H1 (cell line): ENCODE measurements at regions of chr4 and their contacts with region 1.

Region 1: DNA sequence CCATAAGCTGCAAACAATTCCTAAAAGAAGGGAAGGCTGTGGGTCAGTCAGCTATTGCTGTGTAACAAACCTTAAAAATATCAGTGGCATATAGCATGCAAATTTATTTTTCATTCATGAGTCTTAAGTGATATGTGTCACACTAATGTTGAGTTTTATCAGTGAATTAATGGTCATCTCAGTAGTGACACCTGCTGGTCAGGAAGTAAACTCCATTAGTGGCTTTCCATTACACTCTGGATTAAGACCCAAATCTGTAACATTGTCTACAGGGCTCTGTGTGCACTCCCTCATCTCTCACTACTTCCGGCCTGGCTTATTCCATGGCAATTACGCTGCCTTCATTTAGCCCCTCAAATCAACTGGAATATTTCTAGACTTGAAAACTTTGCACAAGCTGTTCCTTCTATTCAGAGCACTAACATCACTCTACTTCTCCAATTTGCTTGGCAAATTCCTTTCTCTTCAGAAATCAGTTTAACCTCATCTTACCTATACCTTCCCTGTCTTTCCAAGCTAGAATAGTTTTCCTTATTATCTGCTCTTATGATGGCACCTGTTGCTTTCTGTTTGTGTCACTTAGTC is 217.3 kb upstream of the TAPT1 start:
- DNase-seq: no peak
- H3K4me3 ChIP-seq: no peak overlapping the region
- H3K27ac ChIP-seq: no peak overlapping the region
- H3K4me1 ChIP-seq: no peaks in the 10 kb centered on the region
- H3K27me3 ChIP-seq: peaks cover 4 to 7% (median 6%) of the 10 kb centered on the region in 4 experiments; a peak in 6 of 7 replicates
- CTCF ChIP-seq: peak in 2 of 3 experiments; percentile 44 to 70; a peak in 2 of 4 replicates
- EP300 ChIP-seq: no peak
- POLR2A ChIP-seq: no peak
- RAD21 ChIP-seq: peak; percentile 65 to 70

Region 2: DNA sequence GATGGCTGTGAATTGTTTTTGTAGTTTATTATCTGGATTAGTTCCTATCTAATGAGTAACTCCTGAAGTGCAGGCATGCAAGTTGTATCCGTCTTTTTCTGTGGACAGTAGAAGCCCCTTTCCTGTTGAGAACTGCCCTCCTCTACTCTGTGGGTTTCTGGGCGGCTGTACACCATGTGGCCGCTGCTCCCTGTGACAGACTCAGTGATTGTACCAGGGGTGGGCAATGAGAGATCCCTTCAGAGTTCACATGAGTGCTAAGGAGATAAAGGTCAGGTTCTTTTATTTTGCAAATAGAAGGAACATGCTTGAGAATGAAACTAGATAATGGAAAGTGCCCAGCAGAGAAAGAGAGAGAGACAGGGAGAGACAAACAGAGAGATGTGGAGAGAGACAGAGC is 141.0 kb before region 1 on chr4:
- CTCF ChIA-PET with region 1: interaction called, 19 read pairs
- POLR2A ChIA-PET with region 1: no interaction called
- DNase-seq: no peak
- H3K4me3 ChIP-seq: no peak overlapping the region
- H3K27ac ChIP-seq: no peak overlapping the region
- H3K4me1 ChIP-seq: 0 out of 7 replicates have a peak, but pooled peaks cover 0 to 3% (median 0%) of the 10 kb centered on the region in 4 experiments
- H3K27me3 ChIP-seq: no peaks in the 10 kb centered on the region
- CTCF ChIP-seq: no peak
- EP300 ChIP-seq: no peak
- POLR2A ChIP-seq: no peak
- RAD21 ChIP-seq: no peak

Region 3: GRCh38 chr4:16431866-16432265 is 11.7 kb before region 1 on chr4:
- CTCF ChIA-PET with region 1: interaction called, 11 read pairs
- POLR2A ChIA-PET with region 1: no interaction called
- DNase-seq: no peak
- H3K4me3 ChIP-seq: no peak overlapping the region
- H3K27ac ChIP-seq: no peak overlapping the region
- H3K4me1 ChIP-seq: no peaks in the 10 kb centered on the region
- H3K27me3 ChIP-seq: no peaks in the 10 kb centered on the region
- CTCF ChIP-seq: no peak
- EP300 ChIP-seq: no peak
- POLR2A ChIP-seq: no peak
- RAD21 ChIP-seq: no peak

Region 4: DNA sequence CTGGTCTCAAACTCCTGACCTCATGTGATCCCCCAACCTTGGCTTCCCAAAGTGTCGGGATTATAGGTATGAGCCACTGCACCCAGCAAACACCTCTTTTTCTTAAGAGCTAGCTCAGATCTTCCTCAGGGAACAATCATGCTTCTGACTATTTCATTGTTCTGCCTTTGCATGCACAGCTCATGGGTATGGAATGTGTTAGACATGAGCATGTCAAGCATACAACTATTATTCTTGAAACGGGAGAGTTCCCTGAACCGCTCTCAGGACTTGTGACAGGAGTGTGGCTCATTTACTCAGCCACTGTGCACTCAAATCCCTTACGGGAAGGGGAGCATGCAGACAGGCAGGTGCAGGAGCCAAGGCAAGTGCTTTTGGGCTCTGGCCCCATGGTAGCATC is 14.3 kb after region 1 on chr4:
- CTCF ChIA-PET with region 1: interaction called, 14 read pairs
- POLR2A ChIA-PET with region 1: no interaction called
- DNase-seq: no peak
- H3K4me3 ChIP-seq: no peak overlapping the region
- H3K27ac ChIP-seq: no peak overlapping the region
- H3K4me1 ChIP-seq: no peaks in the 10 kb centered on the region
- H3K27me3 ChIP-seq: peaks cover 0 to 3% (median 1%) of the 10 kb centered on the region in 4 experiments; a peak in 4 of 7 replicates
- CTCF ChIP-seq: no peak
- EP300 ChIP-seq: no peak
- POLR2A ChIP-seq: no peak
- RAD21 ChIP-seq: no peak